Posterior vena cava (tissue), 2 donors: ENCODE measurements at regions of chr6 and their contacts with region 1.

Region 1: GRCh38 chr6:30571075-30571768 is at the start of gene ABCF1:
- DNase-seq: peak; percentile 100
- total RNA-seq, gene ABCF1: 39.4 to 42.3 TPM

Region 2: GRCh38 chr6:30612199-30612598 is 41.0 kb after region 1 on chr6:
- intact Hi-C with region 1: loop called in 1 of 2 experiments (anchors 5 kb)
- DNase-seq: no peak

Region 3: GRCh38 chr6:30857549-30857948 is 286.3 kb after region 1 on chr6:
- intact Hi-C with region 1: no loop called
- DNase-seq: peak; percentile 20